CD4-positive, alpha-beta memory T cell (primary cell): ENCODE measurements at regions of chr15 and their contacts with region 1.

Region 1: GRCh38 chr15:43105778-43106485 is at the start of gene UBR1:
- DNase-seq: peak; percentile 88 to 92 (median 90)
- H3K4me3 ChIP-seq: peak within 1 kb of the TSS; percentile 68 to 87
- H3K4me3 Mint-ChIP-seq: peak within 1 kb of the TSS; percentile 87 to 98 (median 94)
- H3K27ac ChIP-seq: peak within 1 kb of the TSS; percentile 93
- H3K27ac Mint-ChIP-seq: peak within 1 kb of the TSS; percentile 98 to 100 (median 99)
- H3K4me1 ChIP-seq: peaks cover 47% of the 10 kb centered on the region
- H3K4me1 Mint-ChIP-seq: peaks cover 35 to 56% (median 47%) of the 10 kb centered on the region in 4 donors
- H3K27me3 ChIP-seq: no peaks in the 10 kb centered on the region
- H3K27me3 Mint-ChIP-seq: peaks cover 0 to 2% of the 10 kb centered on the region in 2 donors
- total RNA-seq, gene UBR1: 48.5 to 50.6 TPM

Region 2: DNA sequence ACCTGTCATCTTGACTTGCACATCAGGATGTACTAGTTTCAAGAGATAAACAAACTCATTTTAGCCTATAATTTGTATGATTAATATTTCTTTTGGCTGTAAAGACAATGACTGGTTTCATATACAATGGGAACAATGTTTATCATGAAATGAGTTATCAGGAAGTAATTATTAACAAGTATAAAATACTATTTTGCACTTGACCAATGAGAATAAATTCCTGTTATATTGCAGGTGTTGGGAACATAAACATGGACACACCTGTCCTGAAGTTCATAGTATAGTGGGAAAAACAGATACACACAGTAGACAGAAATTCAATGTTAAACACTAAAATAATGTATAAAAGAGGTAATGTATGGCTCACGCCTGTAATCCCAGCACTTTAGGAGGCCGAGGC is 57.0 kb before region 1 on chr15:
- CTCF ChIA-PET with region 1: no interaction called
- POLR2A ChIA-PET with region 1: no interaction called
- intact Hi-C with region 1: no loop called
- DNase-seq: no peak
- H3K4me3 ChIP-seq: no peak overlapping the region
- H3K4me3 Mint-ChIP-seq: no peak overlapping the region
- H3K27ac ChIP-seq: no peak overlapping the region
- H3K27ac Mint-ChIP-seq: peak overlapping the region in 2 of 7 donors; percentile 7 to 65
- H3K4me1 ChIP-seq: no peaks in the 10 kb centered on the region
- H3K4me1 Mint-ChIP-seq: peaks cover 0 to 4% (median 2%) of the 10 kb centered on the region in 4 donors
- H3K27me3 ChIP-seq: no peaks in the 10 kb centered on the region
- H3K27me3 Mint-ChIP-seq: no peaks in the 10 kb centered on the region

Region 3: DNA sequence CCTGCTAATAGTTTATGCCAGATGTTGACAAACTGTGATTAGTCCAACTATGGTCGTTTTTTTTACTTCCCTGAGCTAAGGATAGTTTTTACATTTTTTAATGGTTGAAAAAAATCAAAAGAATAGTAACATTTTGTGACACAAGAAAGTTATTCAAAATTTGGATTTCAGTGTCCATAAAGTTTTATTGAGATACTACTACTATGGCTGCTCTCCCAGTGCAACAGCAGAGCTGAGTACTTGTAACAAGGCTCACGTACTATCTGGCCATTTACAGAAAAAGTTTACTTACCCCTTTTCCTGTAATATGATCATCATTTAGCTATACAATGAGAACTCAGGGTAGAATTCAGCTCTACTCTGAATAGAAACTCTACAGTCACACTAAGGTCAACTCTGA is 15.9 kb after region 1 on chr15:
- CTCF ChIA-PET with region 1: interaction called, 4 read pairs
- POLR2A ChIA-PET with region 1: interaction called, 12 read pairs
- intact Hi-C with region 1: loop called (anchors 1 kb)
- DNase-seq: no peak
- H3K4me3 ChIP-seq: no peak overlapping the region
- H3K4me3 Mint-ChIP-seq: peak overlapping the region in 6 of 8 donors; percentile 46 to 98 (median 94)
- H3K27ac ChIP-seq: no peak overlapping the region
- H3K27ac Mint-ChIP-seq: peak overlapping the region in 2 of 7 donors; percentile 98
- H3K4me1 ChIP-seq: peaks cover 11% of the 10 kb centered on the region
- H3K4me1 Mint-ChIP-seq: peaks cover 12 to 17% (median 14%) of the 10 kb centered on the region in 4 donors
- H3K27me3 ChIP-seq: no peaks in the 10 kb centered on the region
- H3K27me3 Mint-ChIP-seq: peaks cover 2% of the 10 kb centered on the region in 2 donors

Region 4: GRCh38 chr15:43127752-43128151 is 21.8 kb after region 1 on chr15:
- CTCF ChIA-PET with region 1: interaction called, 4 read pairs
- POLR2A ChIA-PET with region 1: interaction called, 12 read pairs
- intact Hi-C with region 1: loop called (anchors 1 kb)
- DNase-seq: no peak
- H3K4me3 ChIP-seq: no peak overlapping the region
- H3K4me3 Mint-ChIP-seq: no peak overlapping the region
- H3K27ac ChIP-seq: no peak overlapping the region
- H3K27ac Mint-ChIP-seq: no peak overlapping the region
- H3K4me1 ChIP-seq: peaks cover 7% of the 10 kb centered on the region
- H3K4me1 Mint-ChIP-seq: peaks cover 5 to 14% (median 10%) of the 10 kb centered on the region in 4 donors
- H3K27me3 ChIP-seq: no peaks in the 10 kb centered on the region
- H3K27me3 Mint-ChIP-seq: peaks cover 0 to 5% of the 10 kb centered on the region in 2 donors

Region 5: GRCh38 chr15:43133430-43134156 is 27.7 kb after region 1 on chr15 and contains the start of gene TMEM62:
- CTCF ChIA-PET with region 1: interaction called, 3 read pairs
- POLR2A ChIA-PET with region 1: interaction called, 7 read pairs
- intact Hi-C with region 1: loop called (anchors 1 kb)
- DNase-seq: peak; percentile 47 to 66 (median 56)
- H3K4me3 ChIP-seq: peak within 1 kb of the TSS; percentile 81 to 88
- H3K4me3 Mint-ChIP-seq: peak within 1 kb of the TSS; percentile 90 to 98 (median 95)
- H3K27ac ChIP-seq: peak within 1 kb of the TSS; percentile 72
- H3K27ac Mint-ChIP-seq: peak within 1 kb of the TSS; percentile 83 to 97 (median 94)
- H3K4me1 ChIP-seq: peaks cover 18% of the 10 kb centered on the region
- H3K4me1 Mint-ChIP-seq: peaks cover 11 to 30% (median 22%) of the 10 kb centered on the region in 4 donors
- H3K27me3 ChIP-seq: no peaks in the 10 kb centered on the region
- H3K27me3 Mint-ChIP-seq: peaks cover 2% of the 10 kb centered on the region in 2 donors
- total RNA-seq, gene TMEM62: 14.3 to 17.4 TPM

Region 6: GRCh38 chr15:43150191-43150929 is 44.4 kb after region 1 on chr15:
- CTCF ChIA-PET with region 1: no interaction called
- POLR2A ChIA-PET with region 1: no interaction called
- intact Hi-C with region 1: loop called (anchors 5 kb)
- DNase-seq: no peak
- H3K4me3 ChIP-seq: no peak overlapping the region
- H3K4me3 Mint-ChIP-seq: no peak overlapping the region
- H3K27ac ChIP-seq: no peak overlapping the region
- H3K27ac Mint-ChIP-seq: no peak overlapping the region
- H3K4me1 ChIP-seq: peaks cover 28% of the 10 kb centered on the region
- H3K4me1 Mint-ChIP-seq: peaks cover 8 to 27% (median 13%) of the 10 kb centered on the region in 4 donors
- H3K27me3 ChIP-seq: no peaks in the 10 kb centered on the region
- H3K27me3 Mint-ChIP-seq: no peaks in the 10 kb centered on the region

Region 7: DNA sequence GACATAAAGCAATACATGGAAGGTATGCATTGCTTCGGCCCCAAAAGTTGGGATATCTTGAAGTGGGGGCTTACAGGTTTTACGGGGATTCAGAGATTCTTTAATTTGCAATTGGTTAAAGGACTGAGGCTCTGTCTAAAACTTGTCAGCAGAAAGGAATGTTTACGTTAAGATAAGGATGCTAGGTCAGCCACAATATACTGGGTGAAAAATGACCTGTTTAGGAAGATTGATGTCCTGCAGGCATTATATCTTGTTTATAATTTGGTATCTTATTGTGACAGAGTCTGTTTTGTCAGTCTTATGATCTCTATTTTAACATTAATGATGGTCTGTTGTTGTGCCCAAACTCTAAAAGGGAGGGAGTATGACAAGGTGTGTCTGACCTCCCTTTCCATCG is 64.0 kb after region 1 on chr15:
- CTCF ChIA-PET with region 1: no interaction called
- POLR2A ChIA-PET with region 1: no interaction called
- intact Hi-C with region 1: no loop called
- DNase-seq: no peak
- H3K4me3 ChIP-seq: no peak overlapping the region
- H3K4me3 Mint-ChIP-seq: no peak overlapping the region
- H3K27ac ChIP-seq: no peak overlapping the region
- H3K27ac Mint-ChIP-seq: no peak overlapping the region
- H3K4me1 ChIP-seq: no peaks in the 10 kb centered on the region
- H3K4me1 Mint-ChIP-seq: no peaks in the 10 kb centered on the region
- H3K27me3 ChIP-seq: no peaks in the 10 kb centered on the region
- H3K27me3 Mint-ChIP-seq: no peaks in the 10 kb centered on the region

Region 8: DNA sequence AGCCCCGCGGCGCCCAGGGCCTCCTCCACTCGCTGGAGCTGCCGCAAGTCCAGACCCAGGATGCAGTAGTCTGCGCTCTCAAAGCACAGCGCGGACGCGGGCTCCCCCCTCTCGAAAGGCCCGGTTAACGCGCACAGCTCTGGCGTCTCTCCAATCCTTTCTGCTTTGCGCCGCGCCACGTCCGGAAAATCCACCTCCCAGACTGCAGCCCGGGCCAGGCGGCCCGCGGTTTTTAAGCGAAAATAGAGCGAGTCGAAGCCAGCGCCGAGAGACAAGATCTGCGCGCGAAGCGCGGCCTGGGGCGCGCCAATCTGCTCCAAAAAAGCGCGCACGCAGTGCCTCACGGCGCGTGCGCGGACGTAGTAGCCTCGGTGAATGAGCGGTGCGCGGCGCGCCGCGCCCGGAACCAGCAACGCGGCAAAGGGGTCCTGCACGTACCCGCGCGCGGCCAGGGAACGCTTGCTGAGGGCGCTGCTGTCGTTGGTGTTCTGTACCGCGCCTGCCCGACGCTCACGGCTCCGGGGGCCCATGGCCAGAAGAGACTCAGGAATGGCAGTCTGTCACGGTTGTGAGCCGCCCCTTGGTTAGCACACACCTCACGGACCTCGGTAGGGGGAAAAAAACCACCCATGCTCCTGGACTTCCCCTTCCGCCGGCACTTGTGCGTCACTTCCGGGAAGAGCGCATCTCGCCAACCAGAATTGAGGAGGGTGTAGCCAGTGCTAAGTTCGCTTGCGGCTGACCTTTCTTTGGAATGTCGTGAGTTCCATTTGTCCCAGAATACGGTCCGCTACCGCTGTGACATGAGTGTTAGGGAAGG is 224.2 kb after region 1 on chr15 and contains the start of gene LCMT2:
- CTCF ChIA-PET with region 1: no interaction called
- POLR2A ChIA-PET with region 1: no interaction called
- intact Hi-C with region 1: loop called (anchors 1 kb)
- DNase-seq: peak; percentile 91 to 95 (median 94)
- H3K4me3 ChIP-seq: peak within 1 kb of the TSS; percentile 67 to 91
- H3K4me3 Mint-ChIP-seq: peak within 1 kb of the TSS; percentile 94 to 99 (median 96)
- H3K27ac ChIP-seq: peak within 1 kb of the TSS; percentile 90
- H3K27ac Mint-ChIP-seq: peak within 1 kb of the TSS; percentile 98 to 100 (median 99)
- H3K4me1 ChIP-seq: peaks cover 22% of the 10 kb centered on the region
- H3K4me1 Mint-ChIP-seq: peaks cover 16 to 50% (median 31%) of the 10 kb centered on the region in 4 donors
- H3K27me3 ChIP-seq: no peaks in the 10 kb centered on the region
- H3K27me3 Mint-ChIP-seq: peaks cover 0 to 3% of the 10 kb centered on the region in 2 donors
- total RNA-seq, gene LCMT2: 17.0 to 17.8 TPM